ENCODE measurements at regions of chr3 and their contacts with region 1.

Region 1: DNA sequence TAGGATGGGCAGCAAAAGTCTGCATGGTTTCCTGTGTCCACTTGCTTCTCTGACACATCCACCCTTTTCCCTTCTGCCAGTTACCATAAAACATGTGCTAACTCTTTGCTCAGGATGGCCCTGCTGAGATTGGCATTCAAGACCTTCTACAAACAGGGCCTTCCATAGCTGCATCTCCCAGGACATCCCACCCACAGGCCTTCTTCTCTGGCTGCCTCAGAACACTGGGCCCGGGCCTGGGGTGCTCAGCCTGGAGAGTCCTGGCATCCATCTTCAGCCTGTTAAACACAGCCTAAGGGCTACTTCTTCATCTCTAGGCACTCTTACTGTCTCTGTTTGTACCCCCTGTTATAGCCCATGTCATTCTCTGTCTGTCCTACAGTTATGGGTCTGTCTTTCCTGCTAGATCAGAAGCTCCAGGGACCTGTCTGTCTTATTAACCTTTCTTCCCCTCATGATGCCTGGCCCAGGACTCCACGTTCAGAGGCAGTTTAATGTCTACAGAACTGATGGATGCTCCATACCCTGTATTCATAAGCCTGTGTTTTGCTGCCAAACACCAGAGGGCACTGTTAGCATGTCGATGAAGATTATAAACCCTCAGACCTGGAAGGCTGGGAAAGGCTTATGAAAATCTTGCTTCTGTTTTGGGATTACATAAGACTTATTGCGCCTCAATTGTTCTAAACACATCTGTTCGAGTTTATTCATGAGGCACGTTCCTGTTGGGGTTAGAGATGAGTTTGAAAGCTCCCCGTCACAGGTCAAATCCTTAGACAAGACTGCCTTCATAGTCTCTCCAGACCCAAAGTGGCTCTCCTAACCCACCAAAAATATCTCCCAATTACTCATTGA is 16.5 kb downstream of the SEMA3G start:
- DNase-seq: peak; percentile 57
- ATAC-seq: peak; percentile 87
- H3K4me3 Mint-ChIP-seq: no peak overlapping the region
- H3K27ac Mint-ChIP-seq: no peak overlapping the region
- H3K4me1 Mint-ChIP-seq: no peaks in the 10 kb centered on the region
- H3K27me3 Mint-ChIP-seq: no peaks in the 10 kb centered on the region
- CTCF ChIP-seq: peak; percentile 80

Region 2: GRCh38 chr3:52455283-52456168 is 27.1 kb after region 1 on chr3 and contains the start of gene NISCH:
- CTCF ChIA-PET with region 1: interaction called, 111 read pairs
- POLR2A ChIA-PET with region 1: no interaction called
- intact Hi-C with region 1: no loop called
- DNase-seq: peak; percentile 95
- ATAC-seq: peak; percentile 91
- H3K4me3 Mint-ChIP-seq: peak within 1 kb of the TSS; percentile 83
- H3K27ac Mint-ChIP-seq: peak within 1 kb of the TSS; percentile 94
- H3K4me1 Mint-ChIP-seq: peaks cover 39% of the 10 kb centered on the region
- H3K27me3 Mint-ChIP-seq: no peaks in the 10 kb centered on the region
- CTCF ChIP-seq: no peak
- total RNA-seq, gene NISCH: 57.1 to 57.4 TPM

Measured in activated CD8-positive, alpha-beta T cell treated with anti-CD3 and anti-CD28 coated beads for 36 hours (primary cell).